Colonic mucosa (tissue), 4 donors: ENCODE measurements at regions of chr10 and their contacts with region 1.

Region 1: DNA sequence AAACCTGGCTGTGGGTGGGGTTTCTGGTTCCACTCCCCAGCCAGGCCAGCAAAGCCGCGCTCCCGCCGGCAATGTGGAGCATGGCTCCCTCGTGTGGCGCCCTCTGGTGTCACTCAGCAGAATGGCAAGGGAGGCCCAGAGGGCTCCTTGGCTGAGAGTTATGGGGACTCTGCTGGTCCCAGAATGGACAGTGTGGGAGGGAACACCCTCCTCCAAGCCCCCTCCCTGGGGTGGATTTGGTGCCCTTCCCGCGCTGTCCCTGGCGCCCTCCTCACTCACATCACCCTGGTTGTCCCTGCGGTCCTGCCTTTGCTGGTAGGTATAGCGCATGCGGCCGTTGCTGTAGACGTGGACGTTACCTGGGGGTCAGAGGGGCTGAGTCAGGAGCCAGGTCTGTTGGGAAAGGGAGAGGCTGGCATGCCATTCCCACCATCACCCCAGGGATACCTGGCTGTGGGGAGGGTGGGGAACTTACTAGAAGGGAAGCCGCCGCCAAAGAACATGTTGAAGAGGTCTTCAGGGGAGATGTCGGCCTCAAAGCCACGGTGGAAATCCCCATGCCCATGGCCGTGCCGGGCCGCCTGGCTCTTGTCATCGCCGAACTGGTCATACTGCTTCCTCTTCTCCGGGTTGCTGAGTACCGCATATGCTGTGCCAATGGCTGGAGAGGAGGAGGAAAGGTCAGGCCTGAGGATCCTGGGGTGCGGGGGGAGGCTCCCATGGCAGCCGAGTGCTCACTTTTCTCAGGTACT is 14.0 kb downstream of the DNAJB12 start:
- DNase-seq: peak; percentile 72
- H3K4me3 ChIP-seq: no peak overlapping the region
- H3K27ac ChIP-seq: no peak overlapping the region
- H3K4me1 ChIP-seq: no peaks in the 10 kb centered on the region
- H3K27me3 ChIP-seq: no peaks in the 10 kb centered on the region
- CTCF ChIP-seq: peak; percentile 98

Region 2: GRCh38 chr10:72126184-72126871 is 214.4 kb before region 1 on chr10:
- intact Hi-C with region 1: loop called (anchors 5 kb)
- DNase-seq: no peak
- H3K4me3 ChIP-seq: no peak overlapping the region
- H3K27ac ChIP-seq: no peak overlapping the region
- H3K4me1 ChIP-seq: no peaks in the 10 kb centered on the region
- H3K27me3 ChIP-seq: no peaks in the 10 kb centered on the region
- CTCF ChIP-seq: peak; percentile 22